CD4-positive, alpha-beta T cell (primary cell): ENCODE measurements at regions of chr14 and their contacts with region 1.

Region 1: GRCh38 chr14:91911474-91912032 is 35.9 kb downstream of the FBLN5 start:
- DNase-seq: peak in 13 of 14 experiments; percentile 18 to 80 (median 44)
- ATAC-seq: peak; percentile 99
- H3K4me3 ChIP-seq: no peak overlapping the region
- H3K4me3 Mint-ChIP-seq: no peak overlapping the region
- H3K27ac ChIP-seq: no peak overlapping the region
- H3K27ac Mint-ChIP-seq: peak overlapping the region; percentile 53
- H3K4me1 ChIP-seq: peaks cover 4% of the 10 kb centered on the region
- H3K4me1 Mint-ChIP-seq: peaks cover 24% of the 10 kb centered on the region
- H3K27me3 ChIP-seq: no peaks in the 10 kb centered on the region
- H3K27me3 Mint-ChIP-seq: no peaks in the 10 kb centered on the region
- CTCF ChIP-seq: peak; percentile 73

Region 2: DNA sequence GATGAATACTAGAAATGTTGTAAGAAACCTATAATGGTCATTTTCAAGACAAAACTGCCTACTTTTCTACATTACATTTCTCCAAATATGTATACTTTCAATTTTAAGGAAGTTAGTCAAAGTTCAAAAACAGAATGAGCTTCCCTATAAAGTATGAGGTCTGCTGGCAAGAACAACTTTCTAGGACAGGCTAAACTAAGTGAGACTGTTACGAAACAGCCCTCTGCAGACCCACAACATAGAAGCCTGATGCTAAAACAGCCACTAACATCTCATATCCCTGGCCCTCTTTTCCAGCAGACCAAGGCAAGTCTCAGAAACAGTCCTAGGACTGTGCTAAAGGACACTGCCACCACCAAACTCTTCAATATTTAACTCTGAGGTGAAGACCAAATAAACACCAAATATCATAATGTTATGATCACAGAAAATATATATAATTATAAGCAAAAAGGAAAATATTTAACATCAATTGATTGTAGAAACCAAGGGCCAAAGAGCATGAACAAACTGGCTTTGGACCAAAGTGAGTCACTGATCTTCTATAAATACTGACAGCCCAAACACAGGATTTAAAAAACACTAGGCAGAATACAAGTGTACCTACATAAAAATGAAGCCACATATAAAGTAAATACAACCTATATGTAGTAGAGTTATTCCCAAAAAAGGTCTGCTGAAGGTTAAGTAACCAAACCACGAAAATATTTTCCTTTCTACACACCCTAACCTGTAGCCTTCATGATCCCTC is 429.1 kb before region 1 on chr14:
- CTCF ChIA-PET with region 1: interaction called, 3 read pairs
- POLR2A ChIA-PET with region 1: no interaction called
- intact Hi-C with region 1: loop called in 1 of 2 experiments (anchors 1 kb)
- DNase-seq: no peak
- ATAC-seq: no peak
- H3K4me3 ChIP-seq: no peak overlapping the region
- H3K4me3 Mint-ChIP-seq: no peak overlapping the region
- H3K27ac ChIP-seq: no peak overlapping the region
- H3K27ac Mint-ChIP-seq: peak overlapping the region; percentile 69
- H3K4me1 ChIP-seq: peaks cover 6% of the 10 kb centered on the region
- H3K4me1 Mint-ChIP-seq: peaks cover 84% of the 10 kb centered on the region
- H3K27me3 ChIP-seq: no peaks in the 10 kb centered on the region
- H3K27me3 Mint-ChIP-seq: no peaks in the 10 kb centered on the region
- CTCF ChIP-seq: no peak

Region 3: DNA sequence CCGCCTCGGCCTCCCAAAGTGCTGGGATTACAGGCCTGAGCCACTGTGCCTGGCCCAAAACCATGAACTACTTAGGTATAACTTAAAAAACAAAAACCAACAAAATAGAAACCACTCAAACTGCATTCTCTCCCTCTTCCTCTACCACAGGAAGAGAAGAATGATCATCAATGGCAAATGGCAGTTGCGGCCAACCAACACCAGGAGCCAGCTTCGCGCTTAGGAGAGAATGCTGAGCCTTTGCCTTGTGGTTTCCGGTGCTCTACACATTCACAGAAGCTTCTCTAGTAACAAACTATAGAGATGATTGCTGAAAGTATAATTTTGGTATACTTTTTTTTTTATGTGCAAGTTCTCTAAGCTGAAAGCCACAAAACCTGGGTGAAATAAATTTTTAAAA is 196.7 kb before region 1 on chr14:
- CTCF ChIA-PET with region 1: no interaction called
- POLR2A ChIA-PET with region 1: interaction called, 7 read pairs
- intact Hi-C with region 1: loop called (anchors 2 to 5 kb)
- DNase-seq: peak in 9 of 14 experiments; percentile 16 to 63 (median 41)
- ATAC-seq: peak; percentile 96
- H3K4me3 ChIP-seq: no peak overlapping the region
- H3K4me3 Mint-ChIP-seq: peak overlapping the region; percentile 9
- H3K27ac ChIP-seq: no peak overlapping the region
- H3K27ac Mint-ChIP-seq: peak overlapping the region; percentile 67
- H3K4me1 ChIP-seq: no peaks in the 10 kb centered on the region
- H3K4me1 Mint-ChIP-seq: peaks cover 11% of the 10 kb centered on the region
- H3K27me3 ChIP-seq: no peaks in the 10 kb centered on the region
- H3K27me3 Mint-ChIP-seq: no peaks in the 10 kb centered on the region
- CTCF ChIP-seq: peak; percentile 43

Region 4: GRCh38 chr14:91796617-91797347 is 114.8 kb before region 1 on chr14:
- CTCF ChIA-PET with region 1: interaction called, 5 read pairs
- POLR2A ChIA-PET with region 1: no interaction called
- intact Hi-C with region 1: loop called (anchors 2 to 5 kb)
- DNase-seq: no peak
- ATAC-seq: no peak
- H3K4me3 ChIP-seq: no peak overlapping the region
- H3K4me3 Mint-ChIP-seq: no peak overlapping the region
- H3K27ac ChIP-seq: no peak overlapping the region
- H3K27ac Mint-ChIP-seq: peak overlapping the region; percentile 52
- H3K4me1 ChIP-seq: no peaks in the 10 kb centered on the region
- H3K4me1 Mint-ChIP-seq: peaks cover 28% of the 10 kb centered on the region
- H3K27me3 ChIP-seq: no peaks in the 10 kb centered on the region
- H3K27me3 Mint-ChIP-seq: no peaks in the 10 kb centered on the region
- CTCF ChIP-seq: no peak

Region 5: DNA sequence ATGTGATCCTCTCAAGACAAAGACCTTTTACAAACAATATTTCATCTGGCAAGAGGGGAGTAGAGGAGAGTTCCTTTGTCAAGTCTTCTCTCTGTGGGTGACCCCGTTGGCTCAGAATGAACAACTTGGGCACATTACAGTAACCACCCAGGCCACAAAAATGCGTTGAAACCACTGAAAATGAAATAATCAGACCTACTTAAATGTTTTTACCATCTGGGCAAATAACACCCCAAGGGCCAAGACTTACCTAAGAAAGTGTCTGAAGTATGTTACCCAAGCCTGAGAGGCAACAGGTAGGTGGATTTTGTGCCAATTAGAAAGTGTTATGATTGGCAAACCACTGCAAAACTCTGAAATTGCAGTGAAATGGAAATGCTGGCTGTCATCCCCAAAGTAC is 45.5 kb before region 1 on chr14:
- CTCF ChIA-PET with region 1: interaction called, 8 read pairs
- POLR2A ChIA-PET with region 1: interaction called, 97 read pairs
- intact Hi-C with region 1: no loop called
- DNase-seq: peak in 7 of 14 experiments; percentile 12 to 37 (median 25)
- ATAC-seq: peak; percentile 5
- H3K4me3 ChIP-seq: peak overlapping the region; percentile 85
- H3K4me3 Mint-ChIP-seq: peak overlapping the region; percentile 96
- H3K27ac ChIP-seq: peak overlapping the region; percentile 86 to 97
- H3K27ac Mint-ChIP-seq: peak overlapping the region; percentile 95
- H3K4me1 ChIP-seq: peaks cover 76% of the 10 kb centered on the region
- H3K4me1 Mint-ChIP-seq: peaks cover 86% of the 10 kb centered on the region
- H3K27me3 ChIP-seq: no peaks in the 10 kb centered on the region
- H3K27me3 Mint-ChIP-seq: no peaks in the 10 kb centered on the region
- CTCF ChIP-seq: no peak

Region 6: GRCh38 chr14:91925001-91925726 is 13.6 kb after region 1 on chr14:
- CTCF ChIA-PET with region 1: no interaction called
- POLR2A ChIA-PET with region 1: no interaction called
- intact Hi-C with region 1: no loop called
- DNase-seq: no peak
- ATAC-seq: no peak
- H3K4me3 ChIP-seq: no peak overlapping the region
- H3K4me3 Mint-ChIP-seq: no peak overlapping the region
- H3K27ac ChIP-seq: no peak overlapping the region
- H3K27ac Mint-ChIP-seq: no peak overlapping the region
- H3K4me1 ChIP-seq: no peaks in the 10 kb centered on the region
- H3K4me1 Mint-ChIP-seq: no peaks in the 10 kb centered on the region
- H3K27me3 ChIP-seq: no peaks in the 10 kb centered on the region
- H3K27me3 Mint-ChIP-seq: no peaks in the 10 kb centered on the region
- CTCF ChIP-seq: no peak

Region 7: DNA sequence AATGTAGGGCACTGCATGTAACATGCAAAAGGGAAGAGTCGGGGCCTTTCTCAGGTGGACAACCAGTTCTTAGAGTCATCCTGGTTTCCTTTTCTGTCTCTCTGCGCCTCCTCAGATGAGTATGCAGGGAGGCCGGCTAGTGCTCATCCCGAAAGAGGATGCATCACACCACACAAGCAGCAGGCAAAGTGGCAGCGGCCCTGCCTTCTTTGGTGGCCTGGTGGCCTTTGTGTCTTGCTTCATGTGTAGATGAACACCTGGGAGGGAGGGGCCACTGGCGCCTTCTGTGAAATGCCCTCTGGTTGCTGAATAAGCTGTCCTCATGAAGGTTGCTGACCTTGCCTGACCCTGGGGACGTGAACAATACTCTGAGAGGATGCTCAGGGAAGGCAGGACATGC is 429.4 kb after region 1 on chr14:
- CTCF ChIA-PET with region 1: no interaction called
- POLR2A ChIA-PET with region 1: no interaction called
- intact Hi-C with region 1: no loop called
- DNase-seq: no peak
- ATAC-seq: no peak
- H3K4me3 ChIP-seq: no peak overlapping the region
- H3K4me3 Mint-ChIP-seq: no peak overlapping the region
- H3K27ac ChIP-seq: no peak overlapping the region
- H3K27ac Mint-ChIP-seq: no peak overlapping the region
- H3K4me1 ChIP-seq: no peaks in the 10 kb centered on the region
- H3K4me1 Mint-ChIP-seq: peaks cover 4% of the 10 kb centered on the region
- H3K27me3 ChIP-seq: no peaks in the 10 kb centered on the region
- H3K27me3 Mint-ChIP-seq: peaks cover 9% of the 10 kb centered on the region
- CTCF ChIP-seq: no peak